ENCODE measurements at regions of chr14 and their contacts with region 1.

Region 1: GRCh38 chr14:49173765-49174373 is 412.3 kb downstream of the RPS29 start:
- DNase-seq: no peak
- ATAC-seq: peak; percentile 68
- H3K4me3 Mint-ChIP-seq: no peak overlapping the region
- H3K27ac Mint-ChIP-seq: no peak overlapping the region
- H3K4me1 Mint-ChIP-seq: no peaks in the 10 kb centered on the region
- H3K27me3 Mint-ChIP-seq: peaks cover 5% of the 10 kb centered on the region
- CTCF ChIP-seq: peak; percentile 35

Region 2: DNA sequence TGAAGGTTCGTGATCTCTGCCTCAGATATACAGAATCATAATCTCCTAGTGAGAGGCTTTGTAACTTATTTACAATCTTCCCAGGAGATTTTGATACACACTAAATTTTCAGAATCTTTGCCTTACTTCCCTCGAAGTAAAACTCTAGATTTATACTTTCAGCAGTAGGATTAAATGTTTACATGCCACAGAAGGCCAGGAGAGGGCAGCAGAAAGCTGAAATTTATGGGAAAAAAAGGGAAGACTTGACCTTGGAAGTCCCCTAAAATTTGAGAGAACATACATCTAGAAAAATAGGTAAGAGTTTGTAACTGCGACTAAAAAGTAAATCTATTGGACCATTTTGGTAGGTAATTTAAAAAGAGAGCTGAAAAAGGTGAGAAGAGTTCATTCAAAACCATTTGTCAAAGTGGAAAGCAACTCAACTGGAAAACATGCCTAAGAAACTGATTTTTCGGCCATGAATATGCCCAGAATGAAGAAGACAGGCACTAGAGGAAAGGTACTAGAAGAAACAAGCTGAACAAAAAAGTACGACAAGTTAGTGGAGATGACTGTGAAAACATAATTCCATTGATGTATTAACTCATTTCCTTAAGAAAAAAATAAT is 1256.4 kb before region 1 on chr14:
- CTCF ChIA-PET with region 1: interaction called, 21 read pairs
- POLR2A ChIA-PET with region 1: no interaction called
- intact Hi-C with region 1: loop called (anchors 1 kb)
- DNase-seq: no peak
- ATAC-seq: peak; percentile 37
- H3K4me3 Mint-ChIP-seq: no peak overlapping the region
- H3K27ac Mint-ChIP-seq: no peak overlapping the region
- H3K4me1 Mint-ChIP-seq: peaks cover 5% of the 10 kb centered on the region
- H3K27me3 Mint-ChIP-seq: no peaks in the 10 kb centered on the region
- CTCF ChIP-seq: no peak

Region 3: GRCh38 chr14:48398675-48399282 is 775.1 kb before region 1 on chr14:
- CTCF ChIA-PET with region 1: no interaction called
- POLR2A ChIA-PET with region 1: no interaction called
- intact Hi-C with region 1: loop called (anchors 1 kb)
- DNase-seq: no peak
- ATAC-seq: no peak
- H3K4me3 Mint-ChIP-seq: no peak overlapping the region
- H3K27ac Mint-ChIP-seq: no peak overlapping the region
- H3K4me1 Mint-ChIP-seq: no peaks in the 10 kb centered on the region
- H3K27me3 Mint-ChIP-seq: no peaks in the 10 kb centered on the region
- CTCF ChIP-seq: no peak

Region 4: GRCh38 chr14:49692811-49693734 is 519.2 kb after region 1 on chr14 and contains the start of gene KLHDC1:
- CTCF ChIA-PET with region 1: no interaction called
- POLR2A ChIA-PET with region 1: no interaction called
- intact Hi-C with region 1: no loop called
- DNase-seq: peak; percentile 74
- ATAC-seq: peak; percentile 80
- H3K4me3 Mint-ChIP-seq: peak within 1 kb of the TSS; percentile 83
- H3K27ac Mint-ChIP-seq: peak within 1 kb of the TSS; percentile 84
- H3K4me1 Mint-ChIP-seq: peaks cover 24% of the 10 kb centered on the region
- H3K27me3 Mint-ChIP-seq: no peaks in the 10 kb centered on the region
- CTCF ChIP-seq: no peak
- total RNA-seq, gene KLHDC1: 5.7 and 6.9 TPM in 2 replicates

Measured in activated B cell treated with CpG ODN at 0.5 μM for 24 hours (primary cell).